ENCODE measurements at regions of chr5 and their contacts with region 1.

Region 1: GRCh38 chr5:16791036-16791705 is 144.9 kb downstream of the MYO10 start:
- DNase-seq: no peak
- H3K4me3 Mint-ChIP-seq: no peak overlapping the region
- H3K27ac Mint-ChIP-seq: no peak overlapping the region
- H3K4me1 Mint-ChIP-seq: peaks cover 5% of the 10 kb centered on the region
- H3K27me3 Mint-ChIP-seq: peaks cover 10% of the 10 kb centered on the region

Region 2: GRCh38 chr5:16656561-16657191 is 134.5 kb before region 1 on chr5:
- CTCF ChIA-PET with region 1: no interaction called
- POLR2A ChIA-PET with region 1: no interaction called
- intact Hi-C with region 1: no loop called
- DNase-seq: no peak
- H3K4me3 Mint-ChIP-seq: no peak overlapping the region
- H3K27ac Mint-ChIP-seq: no peak overlapping the region
- H3K4me1 Mint-ChIP-seq: no peaks in the 10 kb centered on the region
- H3K27me3 Mint-ChIP-seq: peaks cover 6% of the 10 kb centered on the region

Region 3: GRCh38 chr5:17189381-17190036 is 398.3 kb after region 1 on chr5:
- CTCF ChIA-PET with region 1: interaction called, 11 read pairs
- POLR2A ChIA-PET with region 1: no interaction called
- intact Hi-C with region 1: loop called (anchors 1 kb)
- DNase-seq: peak; percentile 64
- H3K4me3 Mint-ChIP-seq: no peak overlapping the region
- H3K27ac Mint-ChIP-seq: no peak overlapping the region
- H3K4me1 Mint-ChIP-seq: peaks cover 2% of the 10 kb centered on the region
- H3K27me3 Mint-ChIP-seq: peaks cover 3% of the 10 kb centered on the region